ENCODE measurements at regions of chr6 and their contacts with region 1.

Region 1: DNA sequence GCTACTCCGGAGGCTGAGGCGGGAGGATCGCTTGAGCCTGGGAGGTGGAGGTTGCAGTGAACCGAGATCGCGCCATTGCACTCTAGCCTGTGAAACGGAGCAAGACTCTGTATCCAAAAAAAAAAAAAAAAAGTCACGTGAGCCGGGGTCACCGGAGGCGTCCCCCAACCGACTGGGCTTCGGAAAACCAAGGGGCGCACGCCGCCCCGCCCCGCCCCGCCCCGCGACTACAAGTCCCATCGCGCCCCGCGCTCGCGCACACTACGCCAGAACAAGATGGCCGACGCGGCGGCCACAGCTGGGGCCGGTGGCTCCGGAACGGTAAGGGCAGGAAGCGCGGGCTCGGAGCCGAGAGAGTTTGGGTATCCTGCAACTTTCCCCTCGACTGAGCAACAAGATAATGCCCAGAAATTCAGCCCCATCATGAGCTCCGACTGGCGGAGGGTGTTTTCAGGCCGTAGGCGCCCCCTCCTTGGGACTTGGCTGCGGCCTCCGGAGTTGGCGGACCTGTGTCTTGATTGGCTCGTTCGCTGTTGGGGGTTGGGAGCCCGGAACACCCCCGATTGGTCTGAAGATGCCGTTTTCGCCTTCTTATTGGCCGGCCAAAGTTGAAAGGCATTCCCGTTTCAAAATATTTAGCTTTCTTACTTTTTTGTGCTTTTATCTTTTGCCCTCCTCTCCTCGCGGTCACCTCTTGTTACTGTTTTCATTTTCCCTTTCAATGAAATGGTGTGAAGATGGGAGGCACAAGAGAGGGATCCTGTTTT is at the start of gene TAF8:
- DNase-seq: peak; percentile 95
- ATAC-seq: peak; percentile 69
- H3K4me3 ChIP-seq: peak within 1 kb of the TSS; percentile 86 to 100 (median 93)
- H3K4me3 Mint-ChIP-seq: peak within 1 kb of the TSS; percentile 99
- H3K27ac ChIP-seq: peak within 1 kb of the TSS; percentile 78 to 81
- H3K27ac Mint-ChIP-seq: peak within 1 kb of the TSS; percentile 99
- H3K4me1 ChIP-seq: peaks cover 43 to 45% of the 10 kb centered on the region in 2 donors
- H3K4me1 Mint-ChIP-seq: peaks cover 61% of the 10 kb centered on the region
- H3K27me3 ChIP-seq: no peaks in the 10 kb centered on the region
- H3K27me3 Mint-ChIP-seq: no peaks in the 10 kb centered on the region
- CTCF ChIP-seq: no peak
- total RNA-seq, gene TAF8: 62.1 and 67.0 TPM in 2 replicates

Region 2: GRCh38 chr6:41779793-41780545 is 270.5 kb before region 1 on chr6 and contains the start of gene FRS3:
- CTCF ChIA-PET with region 1: interaction called, 198 read pairs
- POLR2A ChIA-PET with region 1: interaction called, 5 read pairs
- intact Hi-C with region 1: loop called (anchors 1 kb)
- DNase-seq: peak; percentile 98
- ATAC-seq: peak; percentile 96
- H3K4me3 ChIP-seq: peak within 1 kb of the TSS; percentile 49 to 79 (median 67)
- H3K4me3 Mint-ChIP-seq: peak within 1 kb of the TSS; percentile 96
- H3K27ac ChIP-seq: peak within 1 kb of the TSS in 1 of 2 donors; percentile 25
- H3K27ac Mint-ChIP-seq: peak within 1 kb of the TSS; percentile 77
- H3K4me1 ChIP-seq: peaks cover 20 to 28% of the 10 kb centered on the region in 2 donors
- H3K4me1 Mint-ChIP-seq: peaks cover 28% of the 10 kb centered on the region
- H3K27me3 ChIP-seq: no peaks in the 10 kb centered on the region
- H3K27me3 Mint-ChIP-seq: no peaks in the 10 kb centered on the region
- CTCF ChIP-seq: peak; percentile 79
- total RNA-seq, gene FRS3: 8.6 and 9.8 TPM in 2 replicates

Region 3: GRCh38 chr6:41941280-41942066 is 109.0 kb before region 1 on chr6 and contains the start of gene CCND3:
- CTCF ChIA-PET with region 1: interaction called, 263 read pairs
- POLR2A ChIA-PET with region 1: interaction called, 4 read pairs
- intact Hi-C with region 1: no loop called
- DNase-seq: peak; percentile 87
- ATAC-seq: peak; percentile 94
- H3K4me3 ChIP-seq: peak within 1 kb of the TSS; percentile 61 to 77 (median 71)
- H3K4me3 Mint-ChIP-seq: peak within 1 kb of the TSS; percentile 85
- H3K27ac ChIP-seq: peak within 1 kb of the TSS; percentile 10 to 68
- H3K27ac Mint-ChIP-seq: peak within 1 kb of the TSS; percentile 87
- H3K4me1 ChIP-seq: peaks cover 51 to 58% of the 10 kb centered on the region in 2 donors
- H3K4me1 Mint-ChIP-seq: peaks cover 52% of the 10 kb centered on the region
- H3K27me3 ChIP-seq: no peaks in the 10 kb centered on the region
- H3K27me3 Mint-ChIP-seq: no peaks in the 10 kb centered on the region
- CTCF ChIP-seq: no peak
- total RNA-seq, gene CCND3: 136 and 145 TPM in 2 replicates

Region 4: GRCh38 chr6:42028234-42029061 is 22.0 kb before region 1 on chr6:
- CTCF ChIA-PET with region 1: interaction called, 130 read pairs
- POLR2A ChIA-PET with region 1: interaction called, 11 read pairs
- intact Hi-C with region 1: loop called (anchors 1 kb)
- DNase-seq: peak; percentile 29
- ATAC-seq: no peak
- H3K4me3 ChIP-seq: peak overlapping the region in 1 of 5 experiments; percentile 6
- H3K4me3 Mint-ChIP-seq: peak overlapping the region; percentile 69
- H3K27ac ChIP-seq: peak overlapping the region; percentile 57 to 93
- H3K27ac Mint-ChIP-seq: peak overlapping the region; percentile 95
- H3K4me1 ChIP-seq: peaks cover 75 to 95% of the 10 kb centered on the region in 2 donors
- H3K4me1 Mint-ChIP-seq: peaks cover 83% of the 10 kb centered on the region
- H3K27me3 ChIP-seq: no peaks in the 10 kb centered on the region
- H3K27me3 Mint-ChIP-seq: no peaks in the 10 kb centered on the region
- CTCF ChIP-seq: no peak